ENCODE measurements at regions of chr19 and their contacts with region 1.

Region 1: DNA sequence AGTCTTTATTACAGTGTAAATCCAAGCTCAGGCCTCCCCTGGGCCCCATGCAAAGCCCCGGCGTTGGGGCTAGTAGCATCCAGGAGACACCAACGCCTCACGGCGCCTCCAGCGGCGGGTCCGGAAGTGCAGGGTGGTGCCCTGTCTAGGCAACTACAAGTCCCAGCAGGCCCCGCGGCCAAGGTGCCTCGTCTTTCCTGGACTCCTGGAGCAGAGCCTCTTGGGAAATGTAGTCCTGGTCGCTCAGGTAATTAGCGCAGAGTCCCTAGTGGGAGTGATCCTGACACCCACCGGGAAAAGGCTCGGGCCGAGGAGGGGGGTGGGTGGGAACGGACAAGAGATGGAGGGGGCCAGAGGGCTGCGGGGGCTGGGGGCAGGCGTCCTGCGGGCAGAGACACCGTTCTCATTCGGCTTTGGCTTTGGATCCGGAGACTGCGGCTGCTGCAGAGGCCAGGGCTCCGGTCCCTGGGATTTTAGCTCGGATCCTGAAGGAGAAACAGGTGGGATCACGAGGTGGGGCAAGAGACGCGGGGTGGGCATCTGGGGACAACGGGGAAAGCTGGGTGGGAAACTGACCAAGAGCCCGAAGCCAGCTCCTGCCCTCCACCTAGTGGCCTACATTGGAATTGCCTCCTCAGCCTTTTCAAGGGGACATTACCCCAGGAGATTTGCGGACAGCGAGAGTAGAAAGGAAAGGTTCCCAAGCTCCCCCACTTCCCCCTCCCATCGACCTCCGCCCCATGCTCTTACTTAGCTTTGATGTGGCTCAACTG is 11.4 kb downstream of the RTN2 start:
- DNase-seq: peak; percentile 99
- H3K4me3 Mint-ChIP-seq: peak overlapping the region; percentile 86
- H3K27ac Mint-ChIP-seq: peak overlapping the region; percentile 60
- H3K4me1 Mint-ChIP-seq: peaks cover 9% of the 10 kb centered on the region
- H3K27me3 Mint-ChIP-seq: no peaks in the 10 kb centered on the region

Region 2: GRCh38 chr19:45405435-45406225 is 79.9 kb before region 1 on chr19:
- CTCF ChIA-PET with region 1: interaction called, 27 read pairs
- POLR2A ChIA-PET with region 1: no interaction called
- intact Hi-C with region 1: no loop called
- DNase-seq: peak; percentile 89
- H3K4me3 Mint-ChIP-seq: peak overlapping the region; percentile 94
- H3K27ac Mint-ChIP-seq: peak overlapping the region; percentile 84
- H3K4me1 Mint-ChIP-seq: peaks cover 39% of the 10 kb centered on the region
- H3K27me3 Mint-ChIP-seq: peaks cover 26% of the 10 kb centered on the region

Region 3: GRCh38 chr19:45446320-45446763 is 39.1 kb before region 1 on chr19:
- CTCF ChIA-PET with region 1: interaction called, 420 read pairs
- POLR2A ChIA-PET with region 1: interaction called, 4 read pairs
- intact Hi-C with region 1: no loop called
- DNase-seq: no peak
- H3K4me3 Mint-ChIP-seq: no peak overlapping the region
- H3K27ac Mint-ChIP-seq: no peak overlapping the region
- H3K4me1 Mint-ChIP-seq: peaks cover 54% of the 10 kb centered on the region
- H3K27me3 Mint-ChIP-seq: no peaks in the 10 kb centered on the region

Region 4: GRCh38 chr19:45469132-45469944 is 16.2 kb before region 1 on chr19:
- CTCF ChIA-PET with region 1: interaction called, 50 read pairs
- POLR2A ChIA-PET with region 1: no interaction called
- intact Hi-C with region 1: no loop called
- DNase-seq: peak; percentile 96
- H3K4me3 Mint-ChIP-seq: peak overlapping the region; percentile 87
- H3K27ac Mint-ChIP-seq: peak overlapping the region; percentile 84
- H3K4me1 Mint-ChIP-seq: peaks cover 33% of the 10 kb centered on the region
- H3K27me3 Mint-ChIP-seq: peaks cover 1% of the 10 kb centered on the region

Region 5: GRCh38 chr19:45496349-45496953 is 11.0 kb after region 1 on chr19:
- CTCF ChIA-PET with region 1: interaction called, 84 read pairs
- POLR2A ChIA-PET with region 1: interaction called, 5 read pairs
- intact Hi-C with region 1: no loop called
- DNase-seq: peak; percentile 60
- H3K4me3 Mint-ChIP-seq: peak overlapping the region; percentile 50
- H3K27ac Mint-ChIP-seq: no peak overlapping the region
- H3K4me1 Mint-ChIP-seq: peaks cover 33% of the 10 kb centered on the region
- H3K27me3 Mint-ChIP-seq: peaks cover 25% of the 10 kb centered on the region

Region 6: DNA sequence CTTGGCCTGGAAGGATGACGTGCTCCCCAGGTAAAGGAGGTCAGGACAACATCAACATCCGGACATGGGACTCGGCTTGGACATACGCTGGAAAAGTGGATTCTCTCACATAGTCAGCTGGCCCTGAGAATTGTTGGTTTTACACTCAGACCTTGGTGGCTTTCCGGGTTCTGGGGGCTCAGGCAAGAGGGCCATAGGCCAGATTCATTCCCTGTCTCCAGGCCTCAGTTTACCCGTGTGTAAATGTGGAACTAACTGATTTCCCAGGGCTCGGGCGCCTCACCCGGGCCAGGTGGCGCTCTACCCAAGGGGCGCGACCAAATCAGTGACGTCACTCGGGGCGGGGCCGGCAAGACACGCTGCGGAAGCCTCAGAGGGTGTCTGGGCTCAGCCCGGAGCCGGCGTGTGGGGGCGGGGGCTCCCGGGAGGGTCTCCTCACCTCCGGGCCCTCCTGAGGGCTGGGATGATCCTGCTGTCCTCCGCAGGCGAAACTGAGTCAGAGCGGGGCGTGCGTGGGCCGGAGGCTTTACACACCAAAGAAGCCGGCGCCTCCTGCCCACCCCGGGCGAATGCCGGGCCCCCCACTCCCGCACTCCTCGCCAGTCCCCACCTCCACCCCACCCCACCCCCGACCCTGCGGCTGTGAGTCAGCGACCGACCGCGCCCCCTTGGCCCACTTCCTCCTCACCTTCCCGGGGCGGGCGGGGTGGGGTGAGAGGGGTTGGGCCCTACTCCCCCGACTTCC is 20.9 kb after region 1 on chr19:
- CTCF ChIA-PET with region 1: interaction called, 15 read pairs
- POLR2A ChIA-PET with region 1: no interaction called
- intact Hi-C with region 1: no loop called
- DNase-seq: peak; percentile 99
- H3K4me3 Mint-ChIP-seq: peak overlapping the region; percentile 86
- H3K27ac Mint-ChIP-seq: peak overlapping the region; percentile 94
- H3K4me1 Mint-ChIP-seq: peaks cover 35% of the 10 kb centered on the region
- H3K27me3 Mint-ChIP-seq: no peaks in the 10 kb centered on the region

Measured in activated CD4-positive, alpha-beta memory T cell treated with anti-CD3 and anti-CD28 coated beads for 36 hours (primary cell).